K562 (cell line): ENCODE measurements at regions of chr2 and their contacts with region 1.

Region 1: DNA sequence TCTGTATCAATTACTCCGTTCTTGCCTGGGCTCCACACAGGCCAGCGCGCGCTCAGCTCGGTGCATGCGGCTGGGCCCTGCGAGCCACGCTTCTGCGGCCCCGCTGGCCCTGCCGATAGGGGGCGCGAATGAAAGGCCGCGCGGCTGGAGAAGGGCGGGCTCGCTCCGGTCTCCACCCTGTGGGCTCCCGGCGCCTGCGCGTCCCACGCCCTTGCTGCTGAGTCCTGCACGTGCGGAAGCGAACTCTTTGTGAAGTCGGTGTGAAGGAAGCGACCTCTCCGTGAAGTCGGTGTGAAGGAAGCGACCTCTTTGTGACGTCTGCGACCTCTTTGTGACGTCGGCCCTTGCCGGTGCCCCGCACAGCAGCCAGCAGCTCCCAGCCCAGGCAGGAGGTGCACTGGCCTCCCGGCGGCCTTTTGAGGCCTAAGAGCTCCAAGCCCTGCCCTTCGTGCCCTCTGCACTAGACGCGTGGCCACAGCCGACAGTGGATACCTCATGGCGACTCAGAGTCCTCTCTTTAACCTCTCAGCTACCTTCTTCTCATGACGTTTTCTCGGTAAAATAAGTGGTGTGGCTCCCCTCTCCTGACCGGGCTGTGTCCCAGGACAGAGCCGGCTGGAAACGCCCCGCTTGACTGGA is 391.9 kb upstream of the RAB6C start:
- DNase-seq: peak; percentile 55 to 75 (median 66)
- ATAC-seq: peak; percentile 100
- H3K4me3 ChIP-seq: no peak overlapping the region
- H3K27ac ChIP-seq: no peak overlapping the region
- H3K4me1 ChIP-seq: peaks cover 0 to 9% of the 10 kb centered on the region in 2 experiments; a peak in 2 of 5 replicates
- H3K27me3 ChIP-seq: no peaks in the 10 kb centered on the region
- CTCF ChIP-seq: peak; percentile 43 to 68 (median 65); a peak in 5 of 6 replicates
- EP300 ChIP-seq: no peak
- POLR2A ChIP-seq: no peak
- RAD21 ChIP-seq: no peak

Region 2: GRCh38 chr2:131034122-131035051 is 1446.8 kb after region 1 on chr2:
- CTCF ChIA-PET with region 1: no interaction called
- POLR2A ChIA-PET with region 1: no interaction called
- in situ Hi-C with region 1: no loop called
- intact Hi-C with region 1: loop called (anchors 10 kb)
- DNase-seq: no peak
- ATAC-seq: no peak
- H3K4me3 ChIP-seq: no peak overlapping the region
- H3K27ac ChIP-seq: no peak overlapping the region
- H3K4me1 ChIP-seq: peaks cover 2 to 14% of the 10 kb centered on the region in 2 experiments; a peak in 4 of 5 replicates
- H3K27me3 ChIP-seq: peaks cover 3 to 49% of the 10 kb centered on the region in 2 experiments; a peak in 4 of 5 replicates
- CTCF ChIP-seq: no peak
- EP300 ChIP-seq: no peak
- POLR2A ChIP-seq: no peak
- RAD21 ChIP-seq: no peak